ENCODE measurements at regions of chr1 and their contacts with region 1.

Region 1: DNA sequence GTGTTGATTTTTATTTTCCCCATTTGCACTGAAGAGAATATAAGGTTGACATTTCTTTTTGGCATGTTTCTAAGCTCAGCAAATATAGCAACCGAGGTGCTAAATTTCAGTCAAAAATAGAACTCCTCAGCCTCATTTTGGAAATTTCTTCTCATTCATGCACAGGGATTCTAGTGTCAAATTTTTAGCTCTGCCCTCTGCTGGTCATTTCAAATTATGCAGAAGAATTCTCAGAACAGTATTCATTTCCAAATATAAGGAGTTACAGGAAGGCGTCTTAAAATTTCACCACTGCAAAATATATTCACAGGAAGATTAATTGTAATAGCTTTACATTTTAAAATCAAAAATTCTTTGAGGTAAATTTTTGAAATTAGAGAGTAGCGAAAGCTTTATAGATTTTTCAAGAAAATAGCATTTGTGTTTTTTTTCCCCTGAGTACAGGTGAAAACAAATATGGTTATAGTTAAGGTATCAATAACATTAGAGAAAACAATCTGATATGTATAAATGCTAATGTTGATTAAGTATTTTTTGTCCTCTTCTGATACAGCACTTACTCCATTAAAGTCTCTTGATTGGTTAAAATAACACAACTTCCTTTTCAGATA is 57.9 kb downstream of the FMN2 start:
- DNase-seq: no peak
- H3K4me3 ChIP-seq: no peak overlapping the region
- CTCF ChIP-seq: peak; percentile 32

Region 2: GRCh38 chr1:240004086-240004749 is 145.4 kb before region 1 on chr1:
- CTCF ChIA-PET with region 1: interaction called, 21 read pairs
- POLR2A ChIA-PET with region 1: no interaction called
- DNase-seq: no peak
- H3K4me3 ChIP-seq: no peak overlapping the region
- CTCF ChIP-seq: peak; percentile 78

Region 3: GRCh38 chr1:240092301-240093119 is 57.1 kb before region 1 on chr1:
- CTCF ChIA-PET with region 1: interaction called, 13 read pairs
- POLR2A ChIA-PET with region 1: interaction called, 3 read pairs
- DNase-seq: no peak
- H3K4me3 ChIP-seq: peak overlapping the region; percentile 84
- CTCF ChIP-seq: peak; percentile 47

Region 4: GRCh38 chr1:240107058-240107684 is 42.4 kb before region 1 on chr1:
- CTCF ChIA-PET with region 1: interaction called, 23 read pairs
- POLR2A ChIA-PET with region 1: no interaction called
- DNase-seq: no peak
- H3K4me3 ChIP-seq: no peak overlapping the region; the same call in 1 of the 2 replicates
- CTCF ChIP-seq: no peak

Region 5: DNA sequence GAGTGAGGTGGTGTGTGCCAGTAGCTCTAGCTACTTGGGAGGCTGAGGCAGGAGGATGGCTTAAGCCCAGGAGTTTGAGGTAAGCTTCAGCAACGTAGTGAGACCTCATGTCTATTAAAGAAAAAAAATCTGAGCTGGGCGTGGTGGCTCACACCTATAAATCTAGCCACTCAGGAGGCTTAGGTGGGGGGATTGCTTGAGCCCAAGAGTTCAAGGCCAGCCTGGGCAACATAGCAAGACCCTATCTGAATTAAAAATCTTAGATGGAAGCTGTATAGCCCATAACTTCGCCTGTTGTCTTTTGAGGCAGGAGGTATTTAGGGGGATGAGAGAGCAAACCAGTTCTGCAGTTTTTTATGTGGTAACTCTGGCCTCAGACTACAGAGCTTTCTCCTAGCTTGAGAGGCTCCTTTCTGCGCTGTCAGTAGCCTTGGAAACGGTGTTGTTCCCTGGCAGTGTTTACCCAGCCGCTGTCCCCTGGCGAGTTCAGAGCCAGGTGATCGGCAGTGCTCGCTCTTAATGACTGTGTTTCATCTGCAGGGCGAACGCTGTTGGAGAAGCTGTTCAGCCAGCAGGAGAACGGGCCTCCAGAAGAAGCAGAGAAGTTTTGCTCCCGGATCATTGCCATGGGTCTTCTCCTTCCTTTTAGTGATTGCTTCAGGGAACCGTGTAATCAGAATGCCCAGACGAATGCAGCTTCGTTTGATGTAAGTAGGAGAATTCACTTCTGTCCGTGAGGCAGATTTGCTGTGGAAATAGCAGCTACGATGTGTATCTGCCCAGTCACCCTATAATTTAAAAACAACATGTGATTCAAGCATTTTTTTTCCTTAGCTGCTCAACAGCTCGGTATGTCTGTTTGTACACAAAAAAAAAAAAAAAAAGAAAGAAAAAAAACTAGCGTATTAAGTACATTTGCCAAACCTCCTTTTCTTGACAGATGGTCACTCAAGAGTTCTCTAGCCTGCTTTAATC is 26.7 kb before region 1 on chr1:
- CTCF ChIA-PET with region 1: interaction called, 72 read pairs
- POLR2A ChIA-PET with region 1: no interaction called
- DNase-seq: no peak
- H3K4me3 ChIP-seq: no peak overlapping the region
- CTCF ChIP-seq: no peak

Region 6: DNA sequence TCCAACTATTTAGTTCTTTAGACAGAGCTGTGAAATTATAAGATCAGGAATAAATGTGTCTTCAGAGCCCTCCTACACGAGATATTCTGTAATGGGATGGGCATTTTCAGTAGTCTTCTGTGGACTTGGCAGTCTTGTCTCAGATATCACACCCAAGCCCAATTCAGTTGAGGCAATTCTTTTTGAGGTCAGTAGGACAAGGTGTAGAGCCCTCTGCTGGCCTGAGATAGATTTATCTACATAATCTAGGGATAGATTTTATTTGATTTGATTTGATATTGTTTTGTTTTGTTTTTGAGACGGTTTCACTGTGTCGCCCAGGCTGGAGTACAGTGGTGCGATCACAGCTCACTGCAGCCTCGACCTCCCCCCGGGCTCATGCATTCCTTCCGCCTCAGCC is 19.6 kb after region 1 on chr1:
- CTCF ChIA-PET with region 1: interaction called, 146 read pairs
- POLR2A ChIA-PET with region 1: no interaction called
- DNase-seq: no peak
- H3K4me3 ChIP-seq: no peak overlapping the region
- CTCF ChIP-seq: no peak

Region 7: GRCh38 chr1:240691521-240692338 is 542.1 kb after region 1 on chr1:
- CTCF ChIA-PET with region 1: interaction called, 11 read pairs
- POLR2A ChIA-PET with region 1: no interaction called
- DNase-seq: no peak
- H3K4me3 ChIP-seq: no peak overlapping the region
- CTCF ChIP-seq: peak; percentile 85

Measured in AG04449 (cell line).